Head of caudate nucleus (tissue), 42 donors: ENCODE measurements at regions of chr1 and their contacts with region 1.

Region 1: DNA sequence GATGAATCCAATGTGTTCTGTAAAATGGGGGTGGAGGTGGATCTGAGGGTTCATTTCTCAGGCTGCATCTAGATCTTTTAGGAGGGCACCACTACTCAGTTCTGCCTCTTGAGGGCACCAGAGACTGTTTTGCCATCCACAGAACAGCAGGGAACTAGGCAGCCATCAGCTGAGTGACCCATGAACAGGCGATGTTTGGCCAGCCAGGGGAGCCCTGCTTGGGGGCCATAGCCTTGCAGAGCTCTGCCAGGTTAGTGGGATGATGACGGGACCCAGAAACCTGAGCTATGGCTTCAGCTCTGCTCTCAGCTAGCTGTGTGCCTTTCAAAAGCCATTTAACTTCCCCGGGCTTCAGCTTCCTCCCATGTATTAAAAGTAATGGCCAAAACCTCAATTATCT is 13.4 kb upstream of the NOS1AP start:
- DNase-seq: peak; percentile 39 to 90 (median 76)

Region 2: GRCh38 chr1:162276493-162276892 is 220.4 kb after region 1 on chr1:
- intact Hi-C with region 1: loop called (anchors 5 kb)
- DNase-seq: peak in 3 of 42 donors; percentile 9 to 31 (median 19)

Region 3: GRCh38 chr1:162391790-162392563 is 335.9 kb after region 1 on chr1:
- intact Hi-C with region 1: loop called (anchors 5 kb)
- DNase-seq: peak in 32 of 42 donors; percentile 18 to 76 (median 38)